Sigmoid colon (tissue), 7 donors: ENCODE measurements at regions of chr14 and their contacts with region 1.

Region 1: DNA sequence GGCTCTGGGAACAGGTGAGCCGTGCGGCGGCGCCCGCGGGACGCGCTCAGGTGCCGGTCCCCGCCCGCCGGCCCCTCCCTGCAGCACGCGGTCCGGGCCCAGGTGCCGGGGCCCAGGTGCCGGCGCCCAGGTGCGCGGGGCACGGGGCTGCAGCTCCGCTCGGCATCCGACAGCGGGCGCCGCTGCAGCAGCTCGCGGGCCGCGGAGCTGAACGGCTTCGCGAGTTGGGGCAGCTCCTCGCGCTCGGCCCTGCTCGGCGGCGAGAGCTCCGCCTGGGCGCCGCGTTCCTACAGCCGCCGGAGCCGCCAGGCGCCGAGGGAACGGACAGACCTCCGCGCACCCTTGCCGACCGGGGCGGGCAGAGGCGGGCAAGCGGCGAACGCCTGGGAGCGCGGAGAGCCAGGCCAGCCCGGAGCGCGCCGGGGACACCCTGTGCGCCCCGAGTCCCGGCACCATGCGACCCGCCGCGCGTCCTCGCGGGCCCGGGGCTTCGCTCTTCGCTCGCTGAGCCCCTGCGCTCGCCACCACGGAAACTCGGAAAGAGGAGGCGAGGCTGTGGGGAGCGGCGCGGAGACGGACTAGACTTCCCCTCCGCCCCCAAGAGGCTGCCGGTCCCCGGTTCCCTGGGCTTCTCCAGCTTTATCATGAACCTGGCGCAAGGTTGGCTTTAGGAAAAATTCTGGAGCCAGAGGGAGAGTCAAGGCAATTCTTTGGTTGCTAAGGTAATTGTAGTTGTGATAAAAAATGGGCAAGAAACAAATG is at the start of gene RGS6:
- DNase-seq: no peak
- H3K4me3 ChIP-seq: peak within 1 kb of the TSS in 3 of 4 donors; percentile 33 to 44 (median 42)
- H3K27ac ChIP-seq: no peak within 1 kb of the TSS
- H3K4me1 ChIP-seq: peaks cover 0 to 18% (median 14%) of the 10 kb centered on the region in 4 donors
- H3K27me3 ChIP-seq: peaks cover 9 to 55% (median 12%) of the 10 kb centered on the region in 3 donors
- CTCF ChIP-seq: no peak
- EP300 ChIP-seq: no peak
- POLR2A ChIP-seq: no peak
- total RNA-seq, gene RGS6: 1.4 to 8.0 (median 1.7) TPM

Region 2: GRCh38 chr14:72104011-72104613 is 171.7 kb after region 1 on chr14:
- intact Hi-C with region 1: no loop called
- DNase-seq: no peak
- H3K4me3 ChIP-seq: no peak overlapping the region
- H3K27ac ChIP-seq: no peak overlapping the region
- H3K4me1 ChIP-seq: no peaks in the 10 kb centered on the region
- H3K27me3 ChIP-seq: no peaks in the 10 kb centered on the region
- CTCF ChIP-seq: no peak
- EP300 ChIP-seq: no peak
- POLR2A ChIP-seq: no peak

Region 3: GRCh38 chr14:72291908-72292688 is 359.7 kb after region 1 on chr14:
- intact Hi-C with region 1: loop called (anchors 5 kb)
- DNase-seq: no peak
- H3K4me3 ChIP-seq: no peak overlapping the region
- H3K27ac ChIP-seq: no peak overlapping the region
- H3K4me1 ChIP-seq: no peaks in the 10 kb centered on the region
- H3K27me3 ChIP-seq: no peaks in the 10 kb centered on the region
- CTCF ChIP-seq: peak in 3 of 4 experiments; percentile 24 to 60 (median 50)
- EP300 ChIP-seq: no peak
- POLR2A ChIP-seq: no peak

Region 4: GRCh38 chr14:72420725-72421474 is 488.5 kb after region 1 on chr14:
- intact Hi-C with region 1: loop called (anchors 10 kb)
- DNase-seq: peak; percentile 78
- H3K4me3 ChIP-seq: no peak overlapping the region
- H3K27ac ChIP-seq: no peak overlapping the region
- H3K4me1 ChIP-seq: no peaks in the 10 kb centered on the region
- H3K27me3 ChIP-seq: no peaks in the 10 kb centered on the region
- CTCF ChIP-seq: peak in 3 of 4 experiments; percentile 48 to 83 (median 62)
- EP300 ChIP-seq: no peak
- POLR2A ChIP-seq: no peak